Body of pancreas (tissue), 4 donors: ENCODE measurements at regions of chr15 and their contacts with region 1.

Region 1: GRCh38 chr15:34239151-34239808 is 14.5 kb downstream of the EMC4 start:
- DNase-seq: no peak
- ATAC-seq: no peak
- H3K4me3 ChIP-seq: no peak overlapping the region
- H3K27ac ChIP-seq: no peak overlapping the region
- H3K4me1 ChIP-seq: no peaks in the 10 kb centered on the region
- H3K27me3 ChIP-seq: no peaks in the 10 kb centered on the region
- CTCF ChIP-seq: no peak
- POLR2A ChIP-seq: no peak

Region 2: GRCh38 chr15:34101366-34102175 is 137.7 kb before region 1 on chr15 and contains the starts of genes EMC7 and PGBD4:
- intact Hi-C with region 1: loop called (anchors 10 kb)
- DNase-seq: peak; percentile 99
- ATAC-seq: peak; percentile 100
- H3K4me3 ChIP-seq: peak within 1 kb of the TSS; percentile 98 to 99
- H3K27ac ChIP-seq: peak within 1 kb of the TSS; percentile 72 to 88 (median 86)
- H3K4me1 ChIP-seq: peaks cover 20% of the 10 kb centered on the region
- H3K27me3 ChIP-seq: no peaks in the 10 kb centered on the region
- CTCF ChIP-seq: peak in 1 of 7 experiments; percentile 29
- POLR2A ChIP-seq: peak; percentile 78 to 96 (median 95)
- total RNA-seq, gene EMC7: 27.4 to 27.8 TPM
- total RNA-seq, gene PGBD4: 1.0 to 4.6 TPM

Region 3: GRCh38 chr15:34297059-34297458 is 57.8 kb after region 1 on chr15:
- intact Hi-C with region 1: no loop called
- DNase-seq: no peak
- ATAC-seq: no peak
- H3K4me3 ChIP-seq: no peak overlapping the region
- H3K27ac ChIP-seq: no peak overlapping the region
- H3K4me1 ChIP-seq: no peaks in the 10 kb centered on the region
- H3K27me3 ChIP-seq: no peaks in the 10 kb centered on the region
- CTCF ChIP-seq: no peak
- POLR2A ChIP-seq: no peak